Endothelial cell of umbilical vein (primary cell): ENCODE measurements at regions of chr4 and their contacts with region 1.

Region 1: GRCh38 chr4:101419324-101420135 is 72.2 kb upstream of the PPP3CA start:
- DNase-seq: peak; percentile 94
- H3K4me3 ChIP-seq: no peak overlapping the region
- H3K27ac ChIP-seq: no peak overlapping the region
- H3K4me1 ChIP-seq: peaks cover 20% of the 10 kb centered on the region
- H3K27me3 ChIP-seq: no peaks in the 10 kb centered on the region
- CTCF ChIP-seq: no peak
- POLR2A ChIP-seq: peak; percentile 30

Region 2: DNA sequence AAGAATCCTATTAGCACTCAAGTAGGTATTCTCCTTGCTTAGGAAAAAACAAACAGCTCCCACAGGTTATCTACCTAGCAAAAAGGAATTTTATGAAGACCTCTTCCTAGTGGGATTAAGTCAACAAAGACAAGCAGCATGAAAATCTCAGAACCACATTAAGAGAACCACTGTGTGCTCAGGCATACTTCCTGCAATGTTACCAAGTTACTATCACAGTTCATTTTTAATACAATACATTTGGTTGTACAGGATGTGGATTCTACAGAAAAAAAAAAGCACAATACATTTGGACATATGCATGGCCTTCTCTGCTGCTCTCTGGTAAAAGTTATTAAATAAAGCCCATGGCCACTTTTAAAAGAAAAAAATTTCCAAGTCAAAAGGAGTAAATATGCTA is 265.9 kb before region 1 on chr4:
- CTCF ChIA-PET with region 1: no interaction called
- POLR2A ChIA-PET with region 1: no interaction called
- dilution Hi-C with region 1: no loop called
- intact Hi-C with region 1: no loop called
- DNase-seq: peak; percentile 6
- H3K4me3 ChIP-seq: no peak overlapping the region
- H3K27ac ChIP-seq: no peak overlapping the region
- H3K4me1 ChIP-seq: peaks cover 3% of the 10 kb centered on the region
- H3K27me3 ChIP-seq: no peaks in the 10 kb centered on the region
- CTCF ChIP-seq: no peak
- POLR2A ChIP-seq: no peak

Region 3: GRCh38 chr4:101259876-101260275 is 159.7 kb before region 1 on chr4:
- CTCF ChIA-PET with region 1: no interaction called
- POLR2A ChIA-PET with region 1: no interaction called
- dilution Hi-C with region 1: no loop called
- intact Hi-C with region 1: loop called (anchors 5 kb)
- DNase-seq: peak; percentile 66
- H3K4me3 ChIP-seq: peak overlapping the region in 1 of 3 experiments; percentile 37
- H3K27ac ChIP-seq: no peak overlapping the region
- H3K4me1 ChIP-seq: peaks cover 47% of the 10 kb centered on the region
- H3K27me3 ChIP-seq: no peaks in the 10 kb centered on the region
- CTCF ChIP-seq: no peak
- POLR2A ChIP-seq: no peak

Region 4: GRCh38 chr4:102263011-102263787 is 843.7 kb after region 1 on chr4:
- CTCF ChIA-PET with region 1: no interaction called
- POLR2A ChIA-PET with region 1: no interaction called
- dilution Hi-C with region 1: no loop called
- intact Hi-C with region 1: loop called (anchors 10 kb)
- DNase-seq: peak; percentile 64
- H3K4me3 ChIP-seq: no peak overlapping the region
- H3K27ac ChIP-seq: no peak overlapping the region
- H3K4me1 ChIP-seq: peaks cover 4% of the 10 kb centered on the region
- H3K27me3 ChIP-seq: no peaks in the 10 kb centered on the region
- CTCF ChIP-seq: peak; percentile 42 to 52
- POLR2A ChIP-seq: no peak